Vagina (tissue), 2 donors: ENCODE measurements at regions of chrX and their contacts with region 1.

Region 1: GRCh38 chrX:15579778-15580747 is 20.7 kb downstream of the ACE2 start:
- DNase-seq: no peak
- H3K4me3 ChIP-seq: no peak overlapping the region
- H3K27ac ChIP-seq: no peak overlapping the region
- H3K4me1 ChIP-seq: no peaks in the 10 kb centered on the region
- H3K27me3 ChIP-seq: no peaks in the 10 kb centered on the region
- CTCF ChIP-seq: no peak
- POLR2A ChIP-seq: no peak

Region 2: DNA sequence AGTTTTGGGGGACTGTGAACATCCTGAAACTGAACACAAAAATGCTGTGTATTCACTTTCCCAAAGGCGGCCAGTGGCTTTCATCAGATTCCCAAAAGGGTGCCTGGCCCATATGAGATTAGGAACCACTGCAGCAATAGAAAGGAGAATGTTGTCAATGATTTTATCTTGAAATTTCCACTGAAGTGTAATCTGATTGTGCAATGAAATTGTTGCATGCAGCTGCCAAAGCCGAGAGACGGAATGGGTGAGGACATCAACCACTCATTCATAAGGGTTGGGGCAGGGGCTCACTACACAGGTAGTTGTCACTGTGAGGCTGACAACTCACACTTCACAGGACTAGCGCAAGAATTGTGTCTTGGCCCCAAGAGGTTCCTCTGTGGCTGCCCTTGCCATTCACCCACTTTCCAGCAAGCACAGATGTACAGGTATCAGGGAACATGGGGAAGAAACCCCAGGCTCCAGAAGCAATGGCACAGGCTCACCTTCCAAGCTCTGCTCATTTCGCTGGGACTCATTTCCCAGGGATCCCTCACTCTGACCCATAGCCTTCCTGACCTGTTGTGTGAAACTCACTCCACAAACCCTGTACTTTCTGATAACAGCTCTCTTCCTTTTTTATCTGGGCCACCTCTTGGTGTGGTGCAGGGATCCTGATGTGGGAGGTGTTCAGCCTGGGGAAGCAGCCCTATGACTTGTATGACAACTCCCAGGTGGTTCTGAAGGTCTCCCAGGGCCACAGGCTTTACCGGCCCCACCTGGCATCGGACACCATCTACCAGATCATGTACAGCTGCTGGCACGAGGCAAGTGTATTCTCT is 30.7 kb before region 1 on chrX:
- intact Hi-C with region 1: no loop called
- DNase-seq: no peak
- H3K4me3 ChIP-seq: no peak overlapping the region
- H3K27ac ChIP-seq: no peak overlapping the region
- H3K4me1 ChIP-seq: no peaks in the 10 kb centered on the region
- H3K27me3 ChIP-seq: no peaks in the 10 kb centered on the region
- CTCF ChIP-seq: no peak
- POLR2A ChIP-seq: no peak

Region 3: DNA sequence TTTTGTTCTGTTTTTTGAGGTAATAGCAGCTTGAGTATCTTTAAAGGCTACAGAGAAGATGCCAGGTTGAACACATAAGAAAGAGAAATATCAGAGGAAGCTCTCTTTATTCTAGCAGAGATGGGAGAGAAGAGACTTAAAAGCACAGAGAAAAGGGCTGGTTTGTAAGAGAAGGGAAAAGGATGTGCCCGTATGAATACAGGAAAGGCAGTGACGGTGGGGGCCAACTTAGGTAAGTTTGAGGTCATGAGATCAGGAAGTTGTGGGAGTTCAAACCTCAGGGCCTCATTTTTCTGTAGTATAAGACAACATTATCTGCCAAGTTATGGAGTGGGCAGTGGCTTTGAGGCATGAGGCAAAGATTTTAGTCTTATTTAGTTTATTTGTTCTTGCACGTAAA is 948.6 kb after region 1 on chrX:
- intact Hi-C with region 1: loop called (anchors 10 kb)
- DNase-seq: no peak
- H3K4me3 ChIP-seq: no peak overlapping the region
- H3K27ac ChIP-seq: no peak overlapping the region
- H3K4me1 ChIP-seq: no peaks in the 10 kb centered on the region
- H3K27me3 ChIP-seq: no peaks in the 10 kb centered on the region
- CTCF ChIP-seq: no peak
- POLR2A ChIP-seq: no peak